Esophagus squamous epithelium (tissue), 5 donors: ENCODE measurements at regions of chr6 and their contacts with region 1.

Region 1: DNA sequence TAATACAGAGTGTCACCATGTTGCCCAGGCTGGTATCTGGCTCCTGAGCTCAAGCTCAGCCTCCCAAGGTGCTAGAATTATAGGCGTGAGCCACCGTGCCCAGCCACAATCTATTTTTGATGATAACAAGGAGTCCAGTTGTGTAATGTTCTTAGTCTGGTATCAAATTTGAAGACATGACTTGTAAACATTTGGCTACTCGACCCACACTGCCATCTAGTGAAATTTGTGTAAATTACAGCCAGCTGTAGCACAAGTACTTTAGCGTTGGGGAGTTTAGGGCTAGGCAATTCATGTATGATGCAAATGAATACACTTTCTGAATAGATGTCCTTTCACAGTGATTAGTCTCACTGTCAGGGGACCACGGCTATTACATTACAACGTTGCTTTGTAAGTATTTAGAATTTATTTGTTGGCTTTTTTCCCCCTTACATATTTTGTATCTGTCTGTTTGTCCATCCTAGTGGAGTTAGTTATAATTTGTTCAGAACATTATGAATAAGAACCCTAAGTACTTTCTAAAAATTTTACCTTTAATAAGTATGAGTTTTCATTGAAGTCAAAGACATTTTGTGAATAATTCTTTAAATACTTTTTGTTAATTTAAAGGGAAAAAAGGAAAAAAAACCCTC is 139.7 kb downstream of the PRDM13 start:
- DNase-seq: no peak
- H3K4me3 ChIP-seq: no peak overlapping the region
- H3K27ac ChIP-seq: no peak overlapping the region
- H3K4me1 ChIP-seq: no peaks in the 10 kb centered on the region
- H3K27me3 ChIP-seq: peaks cover 0 to 26% (median 0%) of the 10 kb centered on the region in 4 donors
- CTCF ChIP-seq: peak; percentile 63 to 86 (median 80)
- POLR2A ChIP-seq: no peak

Region 2: GRCh38 chr6:99467509-99468106 is 278.8 kb before region 1 on chr6:
- intact Hi-C with region 1: loop called (anchors 10 kb)
- DNase-seq: no peak
- H3K4me3 ChIP-seq: no peak overlapping the region
- H3K27ac ChIP-seq: no peak overlapping the region
- H3K4me1 ChIP-seq: no peaks in the 10 kb centered on the region
- H3K27me3 ChIP-seq: no peaks in the 10 kb centered on the region
- CTCF ChIP-seq: peak; percentile 36 to 66 (median 52)
- POLR2A ChIP-seq: no peak